Tibial artery (tissue), 4 donors: ENCODE measurements at regions of chr1 and their contacts with region 1.

Region 1: DNA sequence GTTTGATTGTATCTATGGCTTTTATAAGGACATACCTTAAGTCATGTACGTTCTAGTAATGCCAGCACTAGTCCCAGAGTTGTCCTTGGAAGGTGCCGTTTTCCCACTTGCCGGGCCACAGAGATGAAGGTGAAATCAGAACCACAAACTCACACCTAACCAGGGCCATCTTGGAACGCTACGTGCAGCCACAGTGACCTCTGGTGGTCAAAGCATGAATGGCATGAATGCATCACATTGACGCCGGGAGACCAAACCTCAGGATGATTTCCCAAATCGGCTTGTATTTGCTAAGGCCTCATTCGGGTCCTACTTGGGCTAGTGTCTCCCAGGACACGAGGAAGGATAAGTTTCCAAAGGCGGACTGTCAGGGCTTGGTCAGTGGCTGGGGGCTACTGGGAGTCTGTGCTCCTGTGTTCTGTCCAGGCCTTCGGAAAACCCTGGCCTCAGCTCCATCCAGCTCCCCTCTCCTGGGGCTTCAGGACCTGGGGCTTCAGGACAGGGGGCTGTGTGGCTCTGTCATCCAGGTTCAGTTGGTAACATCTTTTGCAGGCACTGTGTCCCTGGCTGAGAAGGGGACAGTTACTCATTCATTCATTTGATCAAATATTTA is 260.5 kb downstream of the PRDM2 start:
- DNase-seq: peak; percentile 70 to 77
- H3K4me3 ChIP-seq: no peak overlapping the region
- H3K27ac ChIP-seq: no peak overlapping the region
- H3K4me1 ChIP-seq: no peaks in the 10 kb centered on the region
- H3K27me3 ChIP-seq: peaks cover 0 to 24% of the 10 kb centered on the region in 2 donors
- CTCF ChIP-seq: peak; percentile 87 to 97

Region 2: DNA sequence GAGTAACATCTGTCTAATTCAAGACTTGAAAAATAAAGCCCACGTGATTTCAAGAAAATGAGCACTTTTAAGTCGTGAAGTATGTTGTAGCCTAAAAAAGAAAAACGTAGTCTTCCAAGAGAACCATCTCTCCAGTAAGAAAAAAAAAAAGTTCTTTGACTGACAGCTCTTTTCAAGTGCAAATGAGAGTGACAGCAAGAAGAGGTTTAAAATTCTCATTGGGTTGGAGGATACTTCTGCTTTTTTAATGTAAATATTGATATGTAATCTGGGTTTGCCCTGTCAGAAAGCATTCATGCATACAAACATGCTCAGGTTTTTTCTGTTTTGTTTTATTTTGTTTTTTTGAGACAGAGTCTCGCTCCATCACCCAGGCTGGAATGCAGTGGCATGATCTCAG is 292.8 kb before region 1 on chr1:
- intact Hi-C with region 1: loop called (anchors 5 kb)
- DNase-seq: no peak
- H3K4me3 ChIP-seq: no peak overlapping the region
- H3K27ac ChIP-seq: no peak overlapping the region
- H3K4me1 ChIP-seq: no peaks in the 10 kb centered on the region
- H3K27me3 ChIP-seq: peaks cover 0 to 17% of the 10 kb centered on the region in 2 donors
- CTCF ChIP-seq: no peak

Region 3: GRCh38 chr1:13828454-13829151 is 131.9 kb before region 1 on chr1:
- intact Hi-C with region 1: loop called (anchors 10 kb)
- DNase-seq: peak in 1 of 2 donors; percentile 35
- H3K4me3 ChIP-seq: no peak overlapping the region
- H3K27ac ChIP-seq: no peak overlapping the region
- H3K4me1 ChIP-seq: no peaks in the 10 kb centered on the region
- H3K27me3 ChIP-seq: peaks cover 0 to 13% of the 10 kb centered on the region in 2 donors
- CTCF ChIP-seq: peak in 1 of 2 experiments; percentile 39

Region 4: DNA sequence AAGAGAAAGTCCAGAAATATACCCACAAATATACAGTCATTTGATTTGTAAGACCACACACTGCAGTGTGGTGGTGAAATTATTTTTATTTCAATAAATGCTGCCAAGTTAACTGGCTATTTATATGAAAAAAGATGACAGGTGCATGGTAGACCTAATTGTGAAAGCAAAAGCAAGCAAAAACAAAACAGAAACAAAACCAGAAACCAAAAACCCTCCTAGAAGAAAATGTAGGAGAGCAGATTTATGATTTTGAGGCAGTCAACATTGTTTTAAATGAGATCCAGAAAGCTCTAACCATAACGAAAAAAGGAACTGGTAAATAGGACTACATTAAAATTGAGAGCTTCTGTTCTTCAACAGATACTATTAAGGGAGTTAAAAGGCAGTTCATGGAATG is 43.1 kb after region 1 on chr1:
- intact Hi-C with region 1: no loop called
- DNase-seq: no peak
- H3K4me3 ChIP-seq: no peak overlapping the region
- H3K27ac ChIP-seq: no peak overlapping the region
- H3K4me1 ChIP-seq: no peaks in the 10 kb centered on the region
- H3K27me3 ChIP-seq: no peaks in the 10 kb centered on the region
- CTCF ChIP-seq: no peak